ENCODE measurements at regions of chr6 and their contacts with region 1.

Region 1: GRCh38 chr6:44456070-44456965 is 68.8 kb downstream of the CDC5L start:
- DNase-seq: peak; percentile 55
- ATAC-seq: peak; percentile 83
- H3K4me3 ChIP-seq: no peak overlapping the region
- H3K4me3 Mint-ChIP-seq: no peak overlapping the region
- H3K27ac ChIP-seq: no peak overlapping the region
- H3K27ac Mint-ChIP-seq: no peak overlapping the region
- H3K4me1 ChIP-seq: no peaks in the 10 kb centered on the region
- H3K4me1 Mint-ChIP-seq: no peaks in the 10 kb centered on the region
- H3K27me3 ChIP-seq: peaks cover 0 to 5% (median 3%) of the 10 kb centered on the region in 4 experiments
- H3K27me3 Mint-ChIP-seq: peaks cover 17% of the 10 kb centered on the region
- CTCF ChIP-seq: peak; percentile 90

Region 2: DNA sequence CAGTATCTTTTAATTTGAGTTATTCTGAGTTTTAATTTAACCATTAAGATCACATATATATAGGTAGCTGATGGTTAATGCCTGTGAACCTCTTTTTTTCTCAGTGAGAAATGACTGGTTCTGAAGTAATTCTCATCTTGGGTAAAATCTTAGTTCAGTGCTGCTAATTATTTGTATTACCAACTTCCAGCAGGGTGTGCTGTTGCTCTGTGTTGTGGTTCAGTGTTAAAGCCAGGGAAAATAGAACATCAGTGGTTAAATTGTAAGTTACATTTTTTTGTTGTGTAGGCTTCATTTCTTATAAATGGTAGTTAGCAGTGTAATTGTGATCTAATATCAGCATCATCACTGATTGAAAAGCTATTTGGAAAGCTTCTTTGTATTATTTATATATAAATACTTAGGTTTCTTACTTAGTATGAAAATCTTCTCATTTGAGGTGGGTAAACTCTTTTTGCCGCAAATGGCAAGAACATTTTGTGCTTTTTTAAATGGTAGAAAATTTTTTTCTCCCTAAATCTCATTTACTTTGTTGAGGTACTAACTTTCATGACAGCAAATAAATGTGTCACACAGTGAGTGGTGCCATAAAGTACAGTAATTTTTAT is 25.1 kb before region 1 on chr6:
- CTCF ChIA-PET with region 1: interaction called, 5 read pairs
- POLR2A ChIA-PET with region 1: no interaction called
- intact Hi-C with region 1: loop called (anchors 2 kb)
- DNase-seq: peak; percentile 42
- ATAC-seq: peak; percentile 28
- H3K4me3 ChIP-seq: no peak overlapping the region
- H3K4me3 Mint-ChIP-seq: no peak overlapping the region
- H3K27ac ChIP-seq: no peak overlapping the region
- H3K27ac Mint-ChIP-seq: no peak overlapping the region
- H3K4me1 ChIP-seq: no peaks in the 10 kb centered on the region
- H3K4me1 Mint-ChIP-seq: no peaks in the 10 kb centered on the region
- H3K27me3 ChIP-seq: no peaks in the 10 kb centered on the region
- H3K27me3 Mint-ChIP-seq: no peaks in the 10 kb centered on the region
- CTCF ChIP-seq: peak; percentile 75

Region 3: GRCh38 chr6:44470746-44471145 is 14.4 kb after region 1 on chr6:
- CTCF ChIA-PET with region 1: interaction called, 24 read pairs
- POLR2A ChIA-PET with region 1: no interaction called
- intact Hi-C with region 1: no loop called
- DNase-seq: no peak
- ATAC-seq: no peak
- H3K4me3 ChIP-seq: no peak overlapping the region
- H3K4me3 Mint-ChIP-seq: no peak overlapping the region
- H3K27ac ChIP-seq: no peak overlapping the region
- H3K27ac Mint-ChIP-seq: no peak overlapping the region
- H3K4me1 ChIP-seq: peaks cover 0 to 3% of the 10 kb centered on the region in 2 donors
- H3K4me1 Mint-ChIP-seq: no peaks in the 10 kb centered on the region
- H3K27me3 ChIP-seq: peaks cover 0 to 4% (median 1%) of the 10 kb centered on the region in 4 experiments
- H3K27me3 Mint-ChIP-seq: peaks cover 16% of the 10 kb centered on the region
- CTCF ChIP-seq: no peak

Region 4: DNA sequence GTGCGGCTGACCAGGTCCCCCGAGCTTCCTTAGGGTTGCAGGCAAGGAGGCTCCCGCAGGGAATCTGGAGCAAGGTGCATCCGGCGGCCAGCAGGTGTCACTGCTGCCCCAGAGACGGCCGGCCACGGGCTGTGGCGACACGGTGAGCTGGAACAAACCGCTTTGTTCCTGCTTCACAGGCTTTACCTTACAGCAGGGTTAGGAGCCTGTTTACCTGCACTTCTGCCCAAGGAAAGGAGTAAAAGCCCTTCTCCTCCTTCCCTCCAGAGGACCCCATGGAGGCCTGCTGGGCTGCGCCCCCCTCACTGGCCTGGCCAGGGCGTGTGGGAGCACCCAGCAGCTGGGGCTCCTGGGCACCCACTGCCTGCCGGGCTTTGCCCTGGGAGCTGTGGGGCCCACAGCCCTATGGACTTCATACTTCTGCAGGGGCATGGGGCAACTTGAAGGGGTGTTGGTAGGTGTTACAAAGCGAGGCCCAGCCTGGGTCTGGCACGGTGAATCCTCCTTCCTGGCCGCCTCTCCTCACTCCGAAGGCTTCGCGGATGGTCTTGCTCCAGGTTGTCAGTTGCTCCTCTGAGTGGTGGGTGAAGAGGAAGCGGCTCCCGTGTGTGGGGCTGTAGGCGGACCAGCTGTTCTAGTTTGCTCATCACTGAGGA is 19.6 kb after region 1 on chr6:
- CTCF ChIA-PET with region 1: interaction called, 24 read pairs
- POLR2A ChIA-PET with region 1: no interaction called
- intact Hi-C with region 1: no loop called
- DNase-seq: peak; percentile 63
- ATAC-seq: peak; percentile 39
- H3K4me3 ChIP-seq: no peak overlapping the region
- H3K4me3 Mint-ChIP-seq: no peak overlapping the region
- H3K27ac ChIP-seq: no peak overlapping the region
- H3K27ac Mint-ChIP-seq: no peak overlapping the region
- H3K4me1 ChIP-seq: peaks cover 0 to 6% of the 10 kb centered on the region in 2 donors
- H3K4me1 Mint-ChIP-seq: no peaks in the 10 kb centered on the region
- H3K27me3 ChIP-seq: peaks cover 0 to 9% (median 1%) of the 10 kb centered on the region in 4 experiments
- H3K27me3 Mint-ChIP-seq: peaks cover 15% of the 10 kb centered on the region
- CTCF ChIP-seq: peak; percentile 72

Measured in B cell (primary cell).